PC-3 (cell line): ENCODE measurements at regions of chr12 and their contacts with region 1.

Region 1: DNA sequence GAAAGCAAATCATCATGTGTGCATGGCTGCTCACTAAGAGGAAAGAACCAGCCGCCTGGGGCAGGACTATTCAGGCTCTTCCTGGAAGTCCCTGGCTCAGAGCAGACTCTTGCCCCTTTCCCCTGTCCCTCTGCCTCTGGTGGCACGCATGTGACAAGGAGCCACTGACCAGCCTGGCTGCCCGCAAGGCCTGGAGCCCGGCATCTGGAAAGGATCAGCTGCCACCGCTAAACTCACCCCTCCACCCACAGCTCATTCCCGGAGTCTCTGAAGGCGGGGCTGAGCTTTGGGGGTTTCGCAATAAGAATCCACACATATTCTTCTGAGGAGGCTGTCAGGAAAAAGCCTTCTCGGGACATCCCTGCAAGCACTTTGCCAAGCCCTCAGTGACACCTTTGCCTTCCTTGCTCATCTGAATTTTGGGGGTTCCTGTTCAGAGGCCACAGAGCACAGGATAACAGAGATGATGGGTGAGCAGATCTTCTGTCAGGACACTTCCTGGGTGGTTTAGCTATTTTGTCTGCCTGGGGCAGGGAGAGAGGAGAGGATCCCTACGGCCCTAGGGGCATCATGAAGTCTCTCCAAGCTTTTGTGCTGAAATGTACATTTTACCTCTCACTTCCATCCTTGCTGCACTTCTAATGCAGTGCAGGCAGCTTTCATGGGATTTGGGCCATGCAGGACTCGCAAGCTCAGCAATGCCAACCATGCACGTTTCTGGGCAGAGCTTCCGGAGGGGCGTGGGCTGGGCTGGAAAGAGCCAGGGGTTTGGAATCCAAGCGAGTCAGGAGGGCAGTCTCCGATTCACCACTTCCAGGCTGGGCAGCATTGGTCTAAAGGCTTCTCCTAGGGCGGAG is 124.8 kb upstream of the MAP1LC3B2 start:
- DNase-seq: peak; percentile 95
- ATAC-seq: peak; percentile 87
- H3K4me3 ChIP-seq: peak overlapping the region; percentile 61
- H3K27ac ChIP-seq: peak overlapping the region; percentile 88
- H3K4me1 ChIP-seq: peaks cover 20% of the 10 kb centered on the region
- H3K27me3 ChIP-seq: no peaks in the 10 kb centered on the region
- CTCF ChIP-seq: no peak

Region 2: DNA sequence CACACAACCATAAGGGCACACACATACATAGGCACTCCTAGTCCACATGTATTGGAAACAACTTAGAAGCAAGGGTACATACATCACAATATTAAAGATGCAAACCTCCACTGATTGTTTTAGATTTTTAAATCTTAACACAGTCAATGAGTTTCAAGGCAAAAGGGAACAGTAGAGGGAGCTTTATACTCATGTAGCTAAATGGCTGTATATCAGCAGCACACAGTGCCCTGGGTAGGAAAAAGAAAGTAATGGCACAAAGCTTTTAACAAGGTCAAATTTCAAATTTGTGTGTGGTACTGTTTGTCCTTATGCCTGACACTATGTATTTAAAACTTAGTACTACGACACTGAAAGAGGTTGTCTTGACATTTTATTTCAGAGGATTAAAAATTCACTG is 418.9 kb before region 1 on chr12:
- CTCF ChIA-PET with region 1: no interaction called
- POLR2A ChIA-PET with region 1: no interaction called
- intact Hi-C with region 1: no loop called
- DNase-seq: peak; percentile 74
- ATAC-seq: peak; percentile 89
- H3K4me3 ChIP-seq: no peak overlapping the region
- H3K27ac ChIP-seq: no peak overlapping the region
- H3K4me1 ChIP-seq: peaks cover 8% of the 10 kb centered on the region
- H3K27me3 ChIP-seq: no peaks in the 10 kb centered on the region
- CTCF ChIP-seq: peak; percentile 87

Region 3: GRCh38 chr12:116466536-116466935 is 32.2 kb after region 1 on chr12:
- CTCF ChIA-PET with region 1: no interaction called
- POLR2A ChIA-PET with region 1: no interaction called
- intact Hi-C with region 1: no loop called
- DNase-seq: peak; percentile 34
- ATAC-seq: peak; percentile 33
- H3K4me3 ChIP-seq: no peak overlapping the region
- H3K27ac ChIP-seq: no peak overlapping the region
- H3K4me1 ChIP-seq: no peaks in the 10 kb centered on the region
- H3K27me3 ChIP-seq: no peaks in the 10 kb centered on the region
- CTCF ChIP-seq: no peak

Region 4: DNA sequence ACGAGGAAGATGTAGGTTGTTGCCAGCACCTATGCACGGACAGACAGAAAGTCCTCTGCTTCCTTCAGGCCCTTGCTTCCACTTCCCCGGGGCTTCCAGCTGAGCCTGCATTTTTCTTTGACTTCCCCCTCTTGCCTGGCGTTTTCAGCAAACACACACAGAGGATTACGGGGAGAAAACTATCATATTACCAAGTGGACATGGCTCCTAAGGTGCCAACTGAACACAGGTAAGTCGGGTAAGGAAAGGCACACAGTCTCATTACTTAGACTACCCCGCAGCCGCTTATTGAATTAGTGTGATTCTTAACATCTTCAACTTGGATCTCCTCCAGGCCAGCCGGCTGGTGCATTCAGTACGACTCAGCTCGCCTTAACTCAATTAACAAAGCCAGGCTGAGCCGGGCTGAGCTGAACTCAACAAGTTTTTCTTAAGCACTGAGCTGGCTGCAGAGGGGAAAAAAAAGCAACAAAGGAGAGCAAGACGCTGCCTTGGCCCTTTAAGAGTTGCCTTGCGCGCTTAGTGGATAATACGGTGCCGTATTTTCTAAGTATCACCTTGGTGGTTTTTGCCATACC is 105.6 kb after region 1 on chr12:
- CTCF ChIA-PET with region 1: interaction called, 15 read pairs
- POLR2A ChIA-PET with region 1: no interaction called
- intact Hi-C with region 1: no loop called
- DNase-seq: peak; percentile 55
- ATAC-seq: peak; percentile 31
- H3K4me3 ChIP-seq: peak overlapping the region; percentile 6; the same call in 1 of the 2 replicates
- H3K27ac ChIP-seq: peak overlapping the region; percentile 31
- H3K4me1 ChIP-seq: peaks cover 27% of the 10 kb centered on the region
- H3K27me3 ChIP-seq: no peaks in the 10 kb centered on the region
- CTCF ChIP-seq: no peak

Region 5: DNA sequence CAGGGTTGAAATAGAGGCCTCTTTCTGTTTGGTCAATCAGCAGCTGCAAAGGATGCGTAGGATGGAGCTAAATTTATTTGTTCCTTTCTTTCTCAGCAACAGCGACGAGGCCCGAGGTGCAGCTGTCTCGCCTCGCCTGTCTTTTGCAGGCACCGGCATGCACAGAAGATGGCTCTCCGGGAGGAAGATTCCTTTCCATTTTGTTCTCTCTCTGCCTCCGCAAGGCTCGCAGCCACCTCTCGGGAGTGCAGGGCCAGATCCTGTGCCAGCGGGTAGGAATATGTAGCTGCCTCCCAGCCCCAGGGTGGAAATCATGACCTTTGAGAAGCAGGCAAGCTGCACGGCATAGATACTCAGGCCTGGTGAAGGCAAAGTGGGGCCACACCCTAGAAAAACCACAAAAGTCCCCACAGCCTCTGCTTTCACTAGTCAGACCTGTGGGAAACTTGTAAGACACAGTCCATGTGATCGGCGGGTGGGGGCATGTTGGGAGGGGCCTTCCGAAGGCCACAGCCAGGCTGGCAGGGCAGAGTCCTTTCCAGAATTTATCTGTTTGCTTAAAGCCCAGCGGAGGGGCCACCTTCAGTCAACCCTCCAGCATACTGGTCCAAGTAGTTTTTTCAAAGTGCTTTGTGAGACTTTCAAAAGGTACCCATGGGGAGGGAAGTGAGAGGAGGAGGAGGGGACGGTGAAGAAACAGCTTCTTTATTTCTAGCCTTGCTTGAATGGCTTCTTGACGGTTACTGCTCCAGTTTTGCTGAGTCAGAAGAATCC is 125.0 kb after region 1 on chr12 and contains the start of gene MAP1LC3B2:
- CTCF ChIA-PET with region 1: no interaction called
- POLR2A ChIA-PET with region 1: no interaction called
- intact Hi-C with region 1: no loop called
- DNase-seq: peak; percentile 74
- ATAC-seq: peak; percentile 87
- H3K4me3 ChIP-seq: no peak within 1 kb of the TSS
- H3K27ac ChIP-seq: peak within 1 kb of the TSS; percentile 86
- H3K4me1 ChIP-seq: peaks cover 14% of the 10 kb centered on the region
- H3K27me3 ChIP-seq: no peaks in the 10 kb centered on the region
- CTCF ChIP-seq: no peak
- total RNA-seq, gene MAP1LC3B2: not detected in 2 replicates

Region 6: DNA sequence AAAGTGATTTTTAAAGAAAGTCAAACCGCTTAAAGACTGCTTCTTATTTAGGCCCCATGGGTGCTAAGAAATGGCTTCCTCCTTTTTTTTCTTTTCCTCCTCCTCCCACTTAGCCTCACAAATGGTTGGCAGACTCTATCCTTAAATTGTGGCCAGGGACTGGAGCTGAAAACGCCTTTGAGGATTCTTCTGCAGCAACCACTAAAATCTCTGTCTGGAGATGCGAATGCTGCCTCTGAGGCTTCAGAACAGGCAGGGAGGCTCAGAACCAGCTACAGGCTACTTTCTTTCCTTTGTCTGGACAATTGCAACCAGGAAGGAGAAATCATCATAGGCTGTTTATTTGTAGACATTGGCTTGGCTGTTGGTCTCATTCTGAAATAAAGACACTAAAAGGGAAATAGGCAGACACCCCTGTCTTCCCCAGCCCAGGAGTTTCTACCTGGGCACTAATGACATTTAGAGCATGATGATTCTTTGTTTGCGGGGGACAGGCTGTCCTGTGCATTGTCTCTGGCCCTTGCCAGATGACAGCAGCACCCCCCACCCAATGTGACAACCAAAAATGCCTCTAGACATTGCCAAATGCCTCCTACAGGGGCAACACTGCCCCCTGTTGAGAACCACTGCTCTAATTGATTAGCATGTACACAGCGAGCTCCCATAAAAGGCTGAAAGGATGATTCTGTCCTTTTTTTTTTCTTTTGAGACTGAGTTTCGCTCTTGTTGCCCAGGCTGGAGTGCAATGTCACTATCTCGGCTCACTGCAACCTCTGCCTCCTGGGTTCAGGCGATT is 175.1 kb after region 1 on chr12:
- CTCF ChIA-PET with region 1: no interaction called
- POLR2A ChIA-PET with region 1: no interaction called
- intact Hi-C with region 1: no loop called
- DNase-seq: peak; percentile 40
- ATAC-seq: no peak
- H3K4me3 ChIP-seq: no peak overlapping the region
- H3K27ac ChIP-seq: no peak overlapping the region
- H3K4me1 ChIP-seq: peaks cover 17% of the 10 kb centered on the region
- H3K27me3 ChIP-seq: no peaks in the 10 kb centered on the region
- CTCF ChIP-seq: peak; percentile 62